ENCODE measurements at regions of chr3 and their contacts with region 1.

Region 1: GRCh38 chr3:49500732-49501609 is 30.9 kb downstream of the DAG1 start:
- DNase-seq: peak; percentile 87 to 93
- ATAC-seq: peak; percentile 95
- H3K4me3 ChIP-seq: peak overlapping the region in 3 of 4 donors; percentile 13 to 18 (median 17)
- H3K27ac ChIP-seq: peak overlapping the region; percentile 89 to 99 (median 96)
- H3K4me1 ChIP-seq: peaks cover 45 to 51% of the 10 kb centered on the region in 2 donors
- H3K27me3 ChIP-seq: no peaks in the 10 kb centered on the region
- CTCF ChIP-seq: no peak
- POLR2A ChIP-seq: peak; percentile 54 to 72

Region 2: GRCh38 chr3:49469936-49470713 is 30.8 kb before region 1 on chr3 and contains the start of gene DAG1:
- in situ Hi-C with region 1: no loop called
- intact Hi-C with region 1: loop called (anchors 1 kb)
- DNase-seq: peak; percentile 96 to 99
- ATAC-seq: peak; percentile 73 to 78
- H3K4me3 ChIP-seq: peak within 1 kb of the TSS; percentile 62 to 78 (median 71)
- H3K27ac ChIP-seq: peak within 1 kb of the TSS; percentile 96 to 99 (median 98)
- H3K4me1 ChIP-seq: peaks cover 38 to 39% of the 10 kb centered on the region in 2 donors
- H3K27me3 ChIP-seq: no peaks in the 10 kb centered on the region
- CTCF ChIP-seq: peak in 3 of 5 experiments; percentile 7 to 15 (median 8)
- POLR2A ChIP-seq: peak; percentile 96 to 99
- total RNA-seq, gene DAG1: 95.0 to 177 (median 109) TPM

Measured in gastrocnemius medialis (tissue), 4 donors.